Activated CD4-positive, alpha-beta T cell treated with anti-CD3 and anti-CD28 coated beads for 36 hours (primary cell): ENCODE measurements at regions of chr3 and their contacts with region 1.

Region 1: GRCh38 chr3:132029182-132029902 is 5.5 kb downstream of the CPNE4 start:
- DNase-seq: peak; percentile 87
- ATAC-seq: peak; percentile 83
- H3K4me3 Mint-ChIP-seq: no peak overlapping the region
- H3K27ac Mint-ChIP-seq: no peak overlapping the region
- H3K4me1 Mint-ChIP-seq: peaks cover 3% of the 10 kb centered on the region
- H3K27me3 Mint-ChIP-seq: peaks cover 46% of the 10 kb centered on the region

Region 2: GRCh38 chr3:131033480-131034080 is 995.8 kb before region 1 on chr3:
- CTCF ChIA-PET with region 1: interaction called, 10 read pairs
- POLR2A ChIA-PET with region 1: no interaction called
- intact Hi-C with region 1: loop called in 1 of 2 experiments (anchors 2 kb)
- DNase-seq: no peak
- ATAC-seq: peak; percentile 65
- H3K4me3 Mint-ChIP-seq: no peak overlapping the region
- H3K27ac Mint-ChIP-seq: no peak overlapping the region
- H3K4me1 Mint-ChIP-seq: no peaks in the 10 kb centered on the region
- H3K27me3 Mint-ChIP-seq: no peaks in the 10 kb centered on the region

Region 3: DNA sequence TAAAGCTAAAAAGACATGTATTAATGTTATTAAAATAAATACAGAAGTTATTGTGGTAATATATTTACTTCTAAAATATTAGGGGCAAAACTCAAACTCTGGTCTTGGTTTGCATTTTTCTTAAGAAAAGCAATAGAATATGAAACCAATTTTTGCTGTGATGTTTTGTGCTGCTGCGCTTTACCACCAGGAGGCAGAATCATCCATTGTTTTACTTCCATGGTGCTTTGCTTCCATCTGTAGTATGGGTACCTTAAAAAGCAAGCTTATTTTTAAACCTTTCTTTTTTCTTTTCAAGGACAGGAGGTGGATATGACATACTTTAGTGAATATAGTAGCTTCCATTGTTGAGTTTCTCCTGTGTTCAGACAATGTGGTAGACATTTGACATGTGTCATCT is 480.0 kb before region 1 on chr3:
- CTCF ChIA-PET with region 1: interaction called, 8 read pairs
- POLR2A ChIA-PET with region 1: no interaction called
- intact Hi-C with region 1: loop called in 1 of 2 experiments (anchors 1 kb)
- DNase-seq: peak; percentile 40
- ATAC-seq: no peak
- H3K4me3 Mint-ChIP-seq: no peak overlapping the region
- H3K27ac Mint-ChIP-seq: no peak overlapping the region
- H3K4me1 Mint-ChIP-seq: no peaks in the 10 kb centered on the region
- H3K27me3 Mint-ChIP-seq: peaks cover 17% of the 10 kb centered on the region

Region 4: DNA sequence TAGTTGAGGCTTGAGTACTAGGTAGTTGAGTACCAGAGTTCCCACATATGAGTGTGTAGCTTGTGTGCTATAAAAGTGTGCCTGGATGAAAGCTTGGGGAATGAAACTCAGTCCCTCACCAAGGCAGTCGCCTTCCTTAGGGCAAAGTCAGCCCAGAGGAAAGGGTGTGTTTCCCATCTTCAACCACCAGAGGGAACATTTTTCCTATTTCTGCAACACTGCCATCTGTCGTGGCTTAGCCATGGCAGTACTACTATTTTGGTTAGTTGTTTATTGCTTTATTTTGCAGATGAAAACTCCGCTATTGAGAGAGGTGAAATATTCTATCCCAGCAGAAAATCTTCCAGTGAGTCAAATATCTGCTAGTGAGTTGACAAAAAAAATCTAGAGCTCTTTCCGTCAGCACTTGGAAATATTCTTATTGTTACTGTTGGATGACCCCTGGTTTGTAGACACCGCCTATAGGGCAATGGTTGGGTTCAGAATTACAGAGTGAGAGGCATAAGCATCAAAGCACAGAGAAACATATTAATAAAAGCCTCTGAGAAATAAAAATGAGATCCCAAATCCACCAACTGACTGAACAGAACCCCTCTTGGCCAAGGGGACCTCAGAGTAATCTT is 234.5 kb before region 1 on chr3:
- CTCF ChIA-PET with region 1: interaction called, 27 read pairs
- POLR2A ChIA-PET with region 1: no interaction called
- intact Hi-C with region 1: loop called (anchors 1 kb)
- DNase-seq: peak; percentile 37
- ATAC-seq: peak; percentile 70
- H3K4me3 Mint-ChIP-seq: no peak overlapping the region
- H3K27ac Mint-ChIP-seq: no peak overlapping the region
- H3K4me1 Mint-ChIP-seq: peaks cover 9% of the 10 kb centered on the region
- H3K27me3 Mint-ChIP-seq: peaks cover 4% of the 10 kb centered on the region